Thyroid gland (tissue), 4 donors: ENCODE measurements at regions of chr9 and their contacts with region 1.

Region 1: DNA sequence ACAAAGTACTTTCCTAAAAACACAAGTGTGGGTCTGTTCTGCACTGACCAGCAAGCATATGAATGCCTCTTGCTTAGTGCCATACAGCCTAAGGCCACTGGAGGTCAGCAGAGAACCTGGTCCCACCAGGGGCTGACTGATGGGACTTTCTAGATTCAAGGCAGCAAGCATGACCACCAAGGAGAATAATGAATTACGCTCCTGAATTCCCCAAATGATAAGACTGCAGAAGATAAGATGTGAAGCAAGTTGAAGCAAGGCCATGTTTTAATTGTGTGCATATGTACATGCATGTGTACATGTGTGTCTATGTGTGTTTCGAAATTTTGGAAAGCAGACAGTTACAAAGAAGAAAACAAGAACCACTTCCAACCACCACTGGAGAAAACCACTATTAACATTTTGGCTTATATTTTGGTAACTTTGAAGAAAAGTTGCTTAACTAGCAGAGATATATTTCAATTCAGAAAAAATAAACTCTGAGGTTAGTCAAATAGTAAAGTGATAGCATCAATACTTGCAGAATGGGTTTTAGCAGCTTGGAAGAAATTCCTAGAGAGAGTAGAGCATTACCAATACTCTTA is 70.5 kb downstream of the ERP44 start:
- DNase-seq: peak; percentile 68 to 78
- H3K4me3 ChIP-seq: no peak overlapping the region
- H3K27ac ChIP-seq: no peak overlapping the region
- H3K4me1 ChIP-seq: no peaks in the 10 kb centered on the region
- H3K27me3 ChIP-seq: no peaks in the 10 kb centered on the region
- CTCF ChIP-seq: peak; percentile 55 to 93 (median 80)
- POLR2A ChIP-seq: no peak

Region 2: GRCh38 chr9:100216178-100216787 is 188.0 kb after region 1 on chr9:
- intact Hi-C with region 1: loop called (anchors 10 kb)
- DNase-seq: peak; percentile 31 to 47
- H3K4me3 ChIP-seq: no peak overlapping the region
- H3K27ac ChIP-seq: no peak overlapping the region
- H3K4me1 ChIP-seq: no peaks in the 10 kb centered on the region
- H3K27me3 ChIP-seq: no peaks in the 10 kb centered on the region
- CTCF ChIP-seq: peak in 5 of 6 experiments; percentile 36 to 54 (median 44)
- POLR2A ChIP-seq: no peak

Region 3: DNA sequence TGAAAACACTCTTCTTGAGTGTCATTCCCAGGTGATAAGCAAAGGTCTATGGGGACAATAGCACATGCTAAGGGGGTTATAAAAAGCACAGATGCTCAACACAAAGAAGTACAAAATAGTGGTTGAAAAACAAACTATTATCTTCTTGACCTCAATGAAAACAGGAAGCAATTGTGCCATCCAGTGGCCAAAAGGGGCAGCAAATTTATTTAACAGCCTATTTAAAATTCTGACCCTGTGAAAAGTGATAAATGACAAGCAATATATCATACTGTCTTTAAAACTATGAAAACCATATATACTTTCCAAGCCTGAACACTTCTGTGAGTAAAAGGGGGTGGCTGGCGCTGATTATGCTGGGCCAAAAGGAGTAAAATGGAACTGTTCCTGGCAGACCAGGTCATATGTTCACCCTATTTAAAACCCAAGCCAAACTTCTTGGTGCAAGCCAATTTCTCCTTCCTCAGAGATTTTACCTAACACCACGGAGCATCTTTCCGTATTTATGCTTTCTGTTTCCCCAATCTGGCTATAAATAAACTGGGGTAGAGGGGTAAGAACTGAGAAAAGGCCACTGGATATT is 294.8 kb after region 1 on chr9:
- intact Hi-C with region 1: loop called (anchors 10 kb)
- DNase-seq: peak; percentile 48 to 50
- H3K4me3 ChIP-seq: no peak overlapping the region
- H3K27ac ChIP-seq: no peak overlapping the region
- H3K4me1 ChIP-seq: no peaks in the 10 kb centered on the region
- H3K27me3 ChIP-seq: no peaks in the 10 kb centered on the region
- CTCF ChIP-seq: peak; percentile 22 to 77 (median 64)
- POLR2A ChIP-seq: no peak